MCF 10A (cell line): ENCODE measurements at regions of chr3 and their contacts with region 1.

Region 1: DNA sequence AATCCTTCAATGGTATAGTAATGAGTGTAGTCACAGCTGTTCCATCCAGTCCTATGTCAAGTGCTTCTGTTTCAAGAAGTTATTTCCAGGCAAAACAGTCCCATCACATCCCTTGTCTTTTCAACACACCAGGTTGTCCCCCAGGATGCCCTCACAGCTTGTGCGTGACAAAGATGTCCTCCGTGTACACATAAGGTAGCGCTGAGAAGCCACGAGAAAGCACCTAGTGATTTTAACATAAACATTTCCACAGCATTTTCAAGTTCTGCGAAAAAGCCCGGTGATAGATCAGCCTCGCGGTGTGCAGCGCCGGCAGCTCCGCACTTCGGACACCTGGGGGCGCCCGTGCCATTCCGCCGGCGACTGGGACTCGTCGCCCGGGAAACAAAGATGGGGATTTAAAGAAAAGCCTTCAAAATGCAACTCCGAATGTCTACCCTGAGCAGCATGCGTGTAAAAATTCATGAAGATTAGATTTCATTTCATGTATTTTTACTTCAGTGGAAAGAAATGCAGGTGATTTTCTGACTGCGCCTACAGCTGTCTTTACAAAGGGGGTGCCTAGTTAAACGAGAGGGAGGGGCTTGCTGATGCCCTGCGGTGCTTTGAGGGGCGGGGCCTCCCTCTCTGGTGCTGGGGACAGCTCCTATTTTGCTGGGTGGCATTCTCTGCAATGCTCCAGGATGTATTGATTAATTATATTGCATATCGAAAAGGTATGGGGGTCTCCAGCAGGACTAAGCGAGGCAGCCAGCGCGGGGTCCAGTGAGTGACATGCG is 49.9 kb downstream of the KY start:
- DNase-seq: peak; percentile 71
- H3K4me3 Mint-ChIP-seq: no peak overlapping the region
- H3K27ac Mint-ChIP-seq: no peak overlapping the region
- H3K4me1 Mint-ChIP-seq: peaks cover 10% of the 10 kb centered on the region
- H3K27me3 Mint-ChIP-seq: no peaks in the 10 kb centered on the region
- CTCF ChIP-seq: peak; percentile 97

Region 2: GRCh38 chr3:134485718-134486576 is 114.9 kb before region 1 on chr3 and contains the starts of genes ANAPC13 and CEP63:
- CTCF ChIA-PET with region 1: no interaction called
- POLR2A ChIA-PET with region 1: no interaction called
- intact Hi-C with region 1: no loop called
- DNase-seq: peak; percentile 98
- H3K4me3 Mint-ChIP-seq: peak within 1 kb of the TSS; percentile 75
- H3K27ac Mint-ChIP-seq: peak within 1 kb of the TSS; percentile 87
- H3K4me1 Mint-ChIP-seq: peaks cover 31% of the 10 kb centered on the region
- H3K27me3 Mint-ChIP-seq: no peaks in the 10 kb centered on the region
- CTCF ChIP-seq: no peak
- total RNA-seq, gene ANAPC13: 61.5 and 78.4 TPM in 2 replicates
- total RNA-seq, gene CEP63: 37.0 and 40.0 TPM in 2 replicates

Region 3: DNA sequence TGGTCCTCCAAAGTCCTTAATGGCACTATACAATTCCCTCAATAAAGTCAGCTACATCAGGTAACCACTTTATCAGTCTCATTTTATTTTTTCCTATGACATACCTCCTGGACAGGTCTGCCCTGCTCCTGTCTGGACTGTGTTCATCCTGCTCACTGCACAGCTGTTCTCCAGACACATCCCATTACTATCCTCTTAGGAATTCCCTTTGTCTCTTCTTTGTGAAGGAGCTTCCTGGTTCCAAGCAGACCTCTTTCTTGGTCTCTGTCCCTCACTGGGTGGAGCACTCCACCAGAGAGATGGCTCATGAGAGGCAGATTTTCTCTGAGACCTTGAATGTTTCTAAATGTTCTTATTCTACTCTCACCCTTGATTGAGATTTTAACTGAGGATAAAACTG is 10.1 kb before region 1 on chr3:
- CTCF ChIA-PET with region 1: interaction called, 20 read pairs
- POLR2A ChIA-PET with region 1: no interaction called
- intact Hi-C with region 1: no loop called
- DNase-seq: no peak
- H3K4me3 Mint-ChIP-seq: no peak overlapping the region
- H3K27ac Mint-ChIP-seq: no peak overlapping the region
- H3K4me1 Mint-ChIP-seq: no peaks in the 10 kb centered on the region
- H3K27me3 Mint-ChIP-seq: peaks cover under 1% of the 10 kb centered on the region
- CTCF ChIP-seq: no peak

Region 4: GRCh38 chr3:134640872-134641470 is 40.1 kb after region 1 on chr3:
- CTCF ChIA-PET with region 1: interaction called, 8 read pairs
- POLR2A ChIA-PET with region 1: no interaction called
- intact Hi-C with region 1: loop called (anchors 1 kb)
- DNase-seq: peak; percentile 31
- H3K4me3 Mint-ChIP-seq: no peak overlapping the region
- H3K27ac Mint-ChIP-seq: no peak overlapping the region
- H3K4me1 Mint-ChIP-seq: no peaks in the 10 kb centered on the region
- H3K27me3 Mint-ChIP-seq: no peaks in the 10 kb centered on the region
- CTCF ChIP-seq: peak; percentile 36

Region 5: GRCh38 chr3:134794950-134795745 is 194.3 kb after region 1 on chr3 and contains the start of gene EPHB1:
- CTCF ChIA-PET with region 1: interaction called, 5 read pairs
- POLR2A ChIA-PET with region 1: no interaction called
- intact Hi-C with region 1: loop called (anchors 5 kb)
- DNase-seq: peak; percentile 69
- H3K4me3 Mint-ChIP-seq: peak within 1 kb of the TSS; percentile 69
- H3K27ac Mint-ChIP-seq: no peak within 1 kb of the TSS
- H3K4me1 Mint-ChIP-seq: peaks cover 5% of the 10 kb centered on the region
- H3K27me3 Mint-ChIP-seq: peaks cover 48% of the 10 kb centered on the region
- CTCF ChIP-seq: peak; percentile 90
- total RNA-seq, gene EPHB1: not detected in 2 replicates

Region 6: GRCh38 chr3:135895106-135895733 is 1294.3 kb after region 1 on chr3:
- CTCF ChIA-PET with region 1: interaction called, 39 read pairs
- POLR2A ChIA-PET with region 1: interaction called, 3 read pairs
- intact Hi-C with region 1: loop called (anchors 1 kb)
- DNase-seq: peak; percentile 83
- H3K4me3 Mint-ChIP-seq: no peak overlapping the region
- H3K27ac Mint-ChIP-seq: no peak overlapping the region
- H3K4me1 Mint-ChIP-seq: peaks cover 9% of the 10 kb centered on the region
- H3K27me3 Mint-ChIP-seq: peaks cover 24% of the 10 kb centered on the region
- CTCF ChIP-seq: peak; percentile 83